ENCODE measurements at regions of chr14 and their contacts with region 1.

Region 1: DNA sequence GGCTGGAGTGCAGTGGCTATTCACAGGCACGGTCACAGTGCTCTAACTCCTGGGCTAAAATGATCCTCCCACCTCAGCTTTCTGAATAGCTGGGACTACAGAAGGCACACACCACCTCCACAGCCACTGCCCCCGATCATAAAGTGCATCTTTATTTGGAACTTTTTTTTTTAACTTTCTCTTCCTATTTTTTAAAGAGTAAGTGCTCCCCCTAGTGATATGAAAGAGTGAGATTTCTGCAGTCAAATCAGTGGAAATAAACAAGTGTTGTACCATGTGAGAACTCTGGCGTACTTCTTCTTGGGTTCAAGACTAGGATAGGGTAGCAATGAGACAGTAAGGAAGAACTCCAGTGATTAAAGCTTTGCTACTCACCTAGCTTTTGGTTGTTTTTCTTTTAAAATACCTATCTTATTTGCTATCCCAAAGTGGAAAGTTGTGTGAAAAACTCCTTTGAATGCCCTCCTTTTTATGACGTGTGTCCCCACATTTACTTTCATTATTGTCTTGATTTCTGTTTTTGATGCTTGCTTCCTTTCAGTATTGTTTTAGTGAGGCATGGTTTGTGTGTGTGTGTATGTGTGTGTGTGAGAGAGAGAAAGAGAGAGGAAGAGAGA is 6.6 kb downstream of the PPP4R4 start:
- DNase-seq: no peak
- H3K4me3 ChIP-seq: no peak overlapping the region
- H3K27ac ChIP-seq: no peak overlapping the region
- H3K4me1 ChIP-seq: no peaks in the 10 kb centered on the region
- H3K27me3 ChIP-seq: no peaks in the 10 kb centered on the region
- CTCF ChIP-seq: peak; percentile 29 to 68 (median 58)

Region 2: GRCh38 chr14:94036313-94037050 is 144.3 kb before region 1 on chr14:
- intact Hi-C with region 1: loop called (anchors 1 kb)
- DNase-seq: peak in 1 of 2 donors; percentile 78
- H3K4me3 ChIP-seq: no peak overlapping the region
- H3K27ac ChIP-seq: no peak overlapping the region
- H3K4me1 ChIP-seq: no peaks in the 10 kb centered on the region
- H3K27me3 ChIP-seq: no peaks in the 10 kb centered on the region
- CTCF ChIP-seq: peak; percentile 59 to 84 (median 74)

Region 3: GRCh38 chr14:94282991-94283723 is 102.4 kb after region 1 on chr14:
- intact Hi-C with region 1: no loop called
- DNase-seq: no peak
- H3K4me3 ChIP-seq: no peak overlapping the region
- H3K27ac ChIP-seq: no peak overlapping the region
- H3K4me1 ChIP-seq: no peaks in the 10 kb centered on the region
- H3K27me3 ChIP-seq: no peaks in the 10 kb centered on the region
- CTCF ChIP-seq: no peak

Measured in ascending aorta (tissue), 2 donors.